ENCODE measurements at regions of chr2 and their contacts with region 1.

Region 1: DNA sequence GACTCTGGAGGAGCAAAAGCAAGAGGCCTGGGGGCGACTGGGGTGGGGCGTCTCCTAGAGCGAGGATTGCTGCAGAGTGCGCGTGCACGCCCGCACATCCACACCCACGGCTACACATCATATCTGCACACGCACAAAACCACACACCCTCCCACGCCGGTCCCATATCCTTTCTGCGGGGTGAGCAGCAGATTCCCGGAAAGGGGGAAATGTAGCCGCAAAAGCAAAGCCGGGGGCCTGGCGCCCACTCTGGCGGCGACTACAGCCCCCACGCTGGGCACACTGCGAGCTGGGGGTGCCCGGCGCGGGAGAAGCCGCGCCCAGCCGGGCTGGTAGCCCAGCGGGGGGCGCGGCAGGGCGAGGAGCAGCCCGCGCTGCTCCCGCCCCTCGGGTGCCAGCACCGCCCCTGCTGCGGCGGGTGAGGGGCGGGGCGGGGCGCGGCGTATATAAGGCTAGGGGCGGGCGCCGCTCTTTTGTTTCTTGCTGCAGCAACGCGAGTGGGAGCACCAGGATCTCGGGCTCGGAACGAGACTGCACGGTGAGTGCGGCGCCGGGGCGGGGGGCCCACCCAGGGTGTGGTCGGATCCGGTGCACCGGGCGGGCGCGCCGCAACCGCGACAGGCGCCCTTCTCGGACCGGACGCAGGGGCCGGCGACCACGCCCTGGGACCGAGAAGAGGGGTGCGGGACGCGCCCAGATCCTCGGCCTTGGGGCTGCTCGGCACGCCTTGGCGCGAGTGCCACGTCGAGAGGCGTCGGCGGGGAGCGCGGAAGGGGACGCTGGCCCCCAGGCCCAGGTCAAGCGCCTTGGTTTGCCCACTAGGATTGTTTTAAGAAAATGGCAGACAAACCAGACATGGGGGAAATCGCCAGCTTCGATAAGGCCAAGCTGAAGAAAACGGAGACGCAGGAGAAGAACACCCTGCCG is at the start of gene TMSB10:
- DNase-seq: peak; percentile 84 to 97 (median 91)
- ATAC-seq: peak; percentile 80
- H3K4me3 ChIP-seq: peak within 1 kb of the TSS; percentile 85 to 91
- H3K4me3 Mint-ChIP-seq: peak within 1 kb of the TSS; percentile 92
- H3K27ac ChIP-seq: peak within 1 kb of the TSS; percentile 68 to 80
- H3K27ac Mint-ChIP-seq: peak within 1 kb of the TSS; percentile 90
- H3K4me1 ChIP-seq: peaks cover 39% of the 10 kb centered on the region
- H3K4me1 Mint-ChIP-seq: peaks cover 59% of the 10 kb centered on the region
- H3K27me3 ChIP-seq: no peaks in the 10 kb centered on the region
- H3K27me3 Mint-ChIP-seq: no peaks in the 10 kb centered on the region
- CTCF ChIP-seq: no peak
- total RNA-seq, gene TMSB10: 1,479 to 1,577 TPM

Region 2: GRCh38 chr2:84516234-84516986 is 389.0 kb before region 1 on chr2 and contains the start of gene DNAH6:
- CTCF ChIA-PET with region 1: no interaction called
- POLR2A ChIA-PET with region 1: no interaction called
- intact Hi-C with region 1: loop called in 1 of 2 experiments (anchors 1 kb)
- DNase-seq: peak; percentile 71 to 95 (median 85)
- ATAC-seq: peak; percentile 98
- H3K4me3 ChIP-seq: peak within 1 kb of the TSS; percentile 45 to 49
- H3K4me3 Mint-ChIP-seq: peak within 1 kb of the TSS; percentile 89
- H3K27ac ChIP-seq: peak within 1 kb of the TSS; percentile 56 to 74
- H3K27ac Mint-ChIP-seq: peak within 1 kb of the TSS; percentile 85
- H3K4me1 ChIP-seq: peaks cover 9% of the 10 kb centered on the region
- H3K4me1 Mint-ChIP-seq: peaks cover 18% of the 10 kb centered on the region
- H3K27me3 ChIP-seq: no peaks in the 10 kb centered on the region
- H3K27me3 Mint-ChIP-seq: no peaks in the 10 kb centered on the region
- CTCF ChIP-seq: no peak
- total RNA-seq, gene DNAH6: 0.30 to 0.61 TPM

Region 3: DNA sequence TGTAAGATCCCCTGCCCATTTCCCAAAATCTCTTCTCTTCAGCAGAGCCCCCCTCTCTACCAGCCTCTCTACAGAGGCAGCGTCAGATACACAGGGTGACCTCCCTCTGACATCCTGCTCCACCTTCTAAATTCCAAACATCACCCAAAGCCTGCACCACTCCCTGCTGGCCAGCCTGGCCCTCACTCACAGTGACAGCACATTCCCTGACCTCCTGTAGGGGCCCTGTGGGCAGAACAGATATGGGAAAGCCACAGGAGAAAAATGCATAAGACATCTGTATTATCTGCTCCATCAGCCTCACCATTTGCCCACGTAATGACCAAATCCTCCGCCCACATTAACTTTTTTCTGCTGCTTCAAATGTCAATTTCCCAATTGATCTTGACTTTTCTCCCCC is 65.1 kb before region 1 on chr2:
- CTCF ChIA-PET with region 1: interaction called, 3 read pairs
- POLR2A ChIA-PET with region 1: interaction called, 10 read pairs
- intact Hi-C with region 1: no loop called
- DNase-seq: no peak
- ATAC-seq: peak; percentile 19
- H3K4me3 ChIP-seq: peak overlapping the region in 1 of 2 experiments; percentile 31
- H3K4me3 Mint-ChIP-seq: peak overlapping the region; percentile 71
- H3K27ac ChIP-seq: peak overlapping the region; percentile 64 to 72
- H3K27ac Mint-ChIP-seq: peak overlapping the region; percentile 93
- H3K4me1 ChIP-seq: peaks cover 90% of the 10 kb centered on the region
- H3K4me1 Mint-ChIP-seq: peaks cover 88% of the 10 kb centered on the region
- H3K27me3 ChIP-seq: no peaks in the 10 kb centered on the region
- H3K27me3 Mint-ChIP-seq: no peaks in the 10 kb centered on the region
- CTCF ChIP-seq: no peak

Region 4: GRCh38 chr2:84888401-84889276 is 16.8 kb before region 1 on chr2:
- CTCF ChIA-PET with region 1: interaction called, 19 read pairs
- POLR2A ChIA-PET with region 1: interaction called, 79 read pairs
- intact Hi-C with region 1: loop called (anchors 1 to 2 kb)
- DNase-seq: peak in 8 of 9 experiments; percentile 19 to 84 (median 62)
- ATAC-seq: peak; percentile 96
- H3K4me3 ChIP-seq: peak overlapping the region; percentile 28 to 39
- H3K4me3 Mint-ChIP-seq: peak overlapping the region; percentile 76
- H3K27ac ChIP-seq: peak overlapping the region; percentile 57 to 87
- H3K27ac Mint-ChIP-seq: peak overlapping the region; percentile 97
- H3K4me1 ChIP-seq: peaks cover 26% of the 10 kb centered on the region
- H3K4me1 Mint-ChIP-seq: peaks cover 61% of the 10 kb centered on the region
- H3K27me3 ChIP-seq: no peaks in the 10 kb centered on the region
- H3K27me3 Mint-ChIP-seq: no peaks in the 10 kb centered on the region
- CTCF ChIP-seq: no peak

Region 5: GRCh38 chr2:84894758-84895520 is 10.5 kb before region 1 on chr2:
- CTCF ChIA-PET with region 1: interaction called, 19 read pairs
- POLR2A ChIA-PET with region 1: interaction called, 79 read pairs
- intact Hi-C with region 1: loop called in 1 of 2 experiments (anchors 1 kb)
- DNase-seq: peak in 3 of 9 experiments; percentile 41 to 68 (median 61)
- ATAC-seq: peak; percentile 60
- H3K4me3 ChIP-seq: peak overlapping the region; percentile 18 to 28
- H3K4me3 Mint-ChIP-seq: peak overlapping the region; percentile 44
- H3K27ac ChIP-seq: peak overlapping the region; percentile 41 to 79
- H3K27ac Mint-ChIP-seq: peak overlapping the region; percentile 95
- H3K4me1 ChIP-seq: peaks cover 55% of the 10 kb centered on the region
- H3K4me1 Mint-ChIP-seq: peaks cover 65% of the 10 kb centered on the region
- H3K27me3 ChIP-seq: no peaks in the 10 kb centered on the region
- H3K27me3 Mint-ChIP-seq: no peaks in the 10 kb centered on the region
- CTCF ChIP-seq: no peak

Region 6: DNA sequence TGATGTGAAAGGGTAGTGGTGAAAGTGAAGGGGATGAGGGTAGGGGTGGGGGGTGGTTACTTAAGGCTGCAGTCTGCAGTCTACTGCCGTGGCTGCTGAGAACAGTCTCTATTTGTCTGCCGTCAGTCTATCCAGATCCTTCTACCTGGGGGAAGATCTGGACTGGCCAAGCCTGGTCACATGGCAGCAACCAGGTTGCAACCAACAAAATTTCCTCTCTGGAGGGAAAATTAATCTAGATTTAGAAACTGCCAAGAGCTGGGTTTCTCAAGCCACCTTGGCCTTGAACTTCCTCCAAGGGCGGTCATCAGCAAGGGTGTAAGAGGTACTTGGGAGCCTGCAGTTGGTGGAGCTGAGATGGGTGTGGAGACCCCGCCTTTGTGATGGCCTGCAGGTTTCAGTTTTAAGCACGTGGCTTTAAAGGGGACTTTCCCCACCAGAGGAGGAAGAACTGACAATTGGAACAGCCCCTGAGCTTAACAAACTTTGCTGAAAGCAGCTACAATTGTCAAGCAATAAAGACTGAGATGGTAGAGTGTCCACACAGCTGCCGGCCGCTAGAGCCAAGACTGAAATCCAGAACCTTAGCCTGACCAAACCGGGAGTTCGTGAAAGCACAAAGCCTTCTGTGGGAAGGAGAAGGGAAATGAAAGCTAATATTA is 34.1 kb after region 1 on chr2:
- CTCF ChIA-PET with region 1: interaction called, 3 read pairs
- POLR2A ChIA-PET with region 1: interaction called, 17 read pairs
- intact Hi-C with region 1: no loop called
- DNase-seq: peak; percentile 33 to 93 (median 68)
- ATAC-seq: peak; percentile 85
- H3K4me3 ChIP-seq: peak overlapping the region; percentile 29
- H3K4me3 Mint-ChIP-seq: peak overlapping the region; percentile 73
- H3K27ac ChIP-seq: peak overlapping the region; percentile 43 to 86
- H3K27ac Mint-ChIP-seq: peak overlapping the region; percentile 94
- H3K4me1 ChIP-seq: peaks cover 23% of the 10 kb centered on the region
- H3K4me1 Mint-ChIP-seq: peaks cover 27% of the 10 kb centered on the region
- H3K27me3 ChIP-seq: no peaks in the 10 kb centered on the region
- H3K27me3 Mint-ChIP-seq: no peaks in the 10 kb centered on the region
- CTCF ChIP-seq: no peak

Measured in CD8-positive, alpha-beta T cell (primary cell).